Esophagus muscularis mucosa (tissue), 4 donors: ENCODE measurements at regions of chr1 and their contacts with region 1.

Region 1: DNA sequence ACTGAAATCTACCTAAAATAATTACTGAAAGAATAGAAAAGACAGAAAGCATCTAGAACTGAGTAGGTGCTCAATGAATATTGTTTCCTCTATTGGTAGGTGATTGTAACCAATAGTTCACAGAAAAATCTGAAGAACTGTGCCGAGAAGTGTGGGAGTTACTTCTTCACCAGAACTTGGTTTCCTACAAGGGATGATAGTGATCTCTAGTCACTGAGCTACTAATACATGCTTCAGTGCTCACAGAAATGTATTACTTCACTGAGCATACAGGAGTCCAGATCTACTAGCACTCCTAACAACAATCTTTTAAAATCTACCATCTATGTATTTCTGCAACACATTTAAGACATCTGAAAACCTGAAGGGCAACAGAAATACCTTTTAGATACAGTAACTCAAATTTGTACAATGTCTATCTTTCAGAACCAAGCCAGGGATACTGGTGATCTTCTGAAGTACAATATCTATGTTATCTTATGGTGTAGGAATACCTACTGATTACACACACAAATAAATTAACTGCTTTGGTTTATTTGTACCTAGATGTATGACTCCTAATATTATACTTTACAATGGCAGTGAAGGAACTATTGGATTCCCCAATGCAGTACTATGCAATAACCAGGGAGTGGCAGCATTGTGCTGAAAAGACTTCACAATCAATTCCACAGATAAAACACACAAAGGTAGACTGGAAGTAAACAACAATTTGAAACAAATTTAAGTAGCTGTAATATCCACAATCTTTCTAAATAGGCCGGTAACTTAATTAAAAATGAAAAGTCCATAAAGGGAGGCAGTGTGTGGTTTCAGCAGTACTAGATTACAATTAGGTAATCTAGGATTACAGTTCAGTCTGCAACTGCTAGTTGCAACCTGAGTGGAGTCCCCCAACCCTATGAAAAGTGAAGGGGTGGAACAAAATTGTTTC is 243.0 kb downstream of the SLC45A1 start:
- DNase-seq: no peak
- H3K4me3 ChIP-seq: no peak overlapping the region
- H3K27ac ChIP-seq: no peak overlapping the region
- H3K4me1 ChIP-seq: peaks cover 8 to 35% (median 22%) of the 10 kb centered on the region in 4 donors
- H3K27me3 ChIP-seq: no peaks in the 10 kb centered on the region
- CTCF ChIP-seq: peak in 2 of 3 experiments; percentile 92 to 96
- EP300 ChIP-seq: no peak
- POLR2A ChIP-seq: no peak

Region 2: DNA sequence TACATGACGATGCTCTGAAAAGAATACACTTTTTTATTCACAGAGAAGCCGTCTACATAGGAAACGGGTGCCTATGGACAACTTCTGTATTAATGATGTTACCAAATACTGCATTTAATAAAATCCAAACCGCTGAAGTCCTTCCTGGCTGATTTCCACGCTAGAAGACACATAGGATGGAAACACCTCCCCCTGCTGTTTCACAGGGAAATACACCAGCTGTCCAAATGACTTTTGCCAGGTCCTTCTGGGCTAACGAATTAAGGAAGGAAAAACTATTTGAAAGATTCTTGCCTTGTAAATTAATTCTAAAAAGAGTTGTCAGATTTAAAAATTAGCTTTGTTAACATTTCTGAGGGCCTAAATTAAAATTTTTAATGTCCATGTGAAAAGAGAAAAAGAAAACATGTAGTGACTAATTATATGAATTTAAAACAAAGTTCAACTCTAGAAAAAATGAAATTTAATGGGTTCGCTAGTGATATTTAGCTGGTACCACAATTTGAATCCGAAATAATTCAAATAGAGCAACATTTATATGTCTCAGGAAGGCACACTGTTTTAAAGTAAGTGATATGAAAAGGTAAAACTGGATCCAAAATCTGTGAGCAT is 110.5 kb after region 1 on chr1:
- intact Hi-C with region 1: loop called (anchors 5 kb)
- DNase-seq: no peak
- H3K4me3 ChIP-seq: no peak overlapping the region
- H3K27ac ChIP-seq: no peak overlapping the region
- H3K4me1 ChIP-seq: peaks cover 43 to 77% (median 69%) of the 10 kb centered on the region in 4 donors
- H3K27me3 ChIP-seq: no peaks in the 10 kb centered on the region
- CTCF ChIP-seq: peak; percentile 82 to 91 (median 83)
- EP300 ChIP-seq: no peak
- POLR2A ChIP-seq: no peak

Region 3: DNA sequence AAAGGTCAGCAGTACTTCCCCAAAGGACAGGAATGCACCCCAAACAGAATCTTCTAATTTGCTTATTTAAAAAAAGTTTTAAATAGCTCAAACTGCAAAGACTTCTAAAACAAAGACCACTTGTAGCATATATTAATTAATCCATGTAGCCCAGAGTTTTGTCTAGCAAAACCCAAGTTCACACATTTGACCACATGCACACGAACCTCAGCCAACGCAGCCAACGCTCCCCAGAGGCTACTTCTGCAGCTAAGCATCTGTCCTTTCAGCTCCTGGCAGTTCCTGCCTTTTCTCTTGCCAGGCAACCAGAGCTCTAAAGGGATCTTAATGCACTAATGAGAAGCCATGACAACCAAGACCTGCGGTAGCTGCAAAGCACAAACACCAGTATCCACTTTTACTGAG is 166.9 kb after region 1 on chr1:
- intact Hi-C with region 1: loop called (anchors 5 kb)
- DNase-seq: no peak
- H3K4me3 ChIP-seq: no peak overlapping the region
- H3K27ac ChIP-seq: peak overlapping the region in 2 of 4 donors; percentile 1 to 22
- H3K4me1 ChIP-seq: peaks cover 4 to 46% (median 43%) of the 10 kb centered on the region in 4 donors
- H3K27me3 ChIP-seq: no peaks in the 10 kb centered on the region
- CTCF ChIP-seq: no peak
- EP300 ChIP-seq: no peak
- POLR2A ChIP-seq: no peak

Region 4: DNA sequence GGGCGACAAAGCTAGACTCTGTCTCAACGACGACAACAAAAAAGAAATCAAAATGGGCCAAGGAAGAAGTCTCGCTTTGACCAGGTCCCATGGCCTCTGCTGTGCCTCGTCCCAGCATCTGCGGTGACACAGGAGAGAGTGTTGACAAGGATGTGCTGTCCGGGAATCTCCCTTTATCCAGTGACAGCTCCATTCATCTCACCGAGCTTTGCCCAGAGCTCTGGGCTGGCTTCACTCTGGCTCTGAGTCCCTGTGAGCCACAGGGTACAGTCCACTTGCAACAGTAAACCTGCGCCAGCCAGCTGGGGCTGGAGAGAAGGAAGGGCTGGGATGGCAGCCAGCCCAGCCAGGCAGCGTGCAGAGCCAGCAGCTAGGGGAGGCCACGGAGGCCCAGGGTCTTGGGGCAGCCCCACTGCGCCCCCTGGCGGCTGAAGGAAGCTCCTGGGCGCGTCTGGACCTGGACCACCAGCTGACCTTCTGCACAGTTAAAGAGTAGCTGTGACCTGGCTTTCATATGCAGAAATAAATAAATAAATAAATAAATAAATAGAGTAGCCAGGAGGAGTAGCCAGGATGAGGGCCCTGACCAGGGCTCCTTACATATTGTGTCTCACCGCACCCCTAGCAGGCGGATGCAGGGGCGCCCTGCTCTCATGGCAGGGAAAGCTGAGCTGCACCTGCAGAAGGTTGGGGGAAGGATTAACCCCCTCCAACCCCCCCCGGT is 287.9 kb after region 1 on chr1:
- intact Hi-C with region 1: loop called (anchors 5 kb)
- DNase-seq: peak; percentile 94
- H3K4me3 ChIP-seq: peak overlapping the region in 2 of 4 donors; percentile 15 to 18
- H3K27ac ChIP-seq: peak overlapping the region; percentile 14 to 76 (median 63)
- H3K4me1 ChIP-seq: peaks cover 13 to 39% (median 26%) of the 10 kb centered on the region in 4 donors
- H3K27me3 ChIP-seq: no peaks in the 10 kb centered on the region
- CTCF ChIP-seq: peak; percentile 87 to 98 (median 97)
- EP300 ChIP-seq: no peak
- POLR2A ChIP-seq: no peak